GM12878 (cell line): ENCODE measurements at regions of chr14 and their contacts with region 1.

Region 1: DNA sequence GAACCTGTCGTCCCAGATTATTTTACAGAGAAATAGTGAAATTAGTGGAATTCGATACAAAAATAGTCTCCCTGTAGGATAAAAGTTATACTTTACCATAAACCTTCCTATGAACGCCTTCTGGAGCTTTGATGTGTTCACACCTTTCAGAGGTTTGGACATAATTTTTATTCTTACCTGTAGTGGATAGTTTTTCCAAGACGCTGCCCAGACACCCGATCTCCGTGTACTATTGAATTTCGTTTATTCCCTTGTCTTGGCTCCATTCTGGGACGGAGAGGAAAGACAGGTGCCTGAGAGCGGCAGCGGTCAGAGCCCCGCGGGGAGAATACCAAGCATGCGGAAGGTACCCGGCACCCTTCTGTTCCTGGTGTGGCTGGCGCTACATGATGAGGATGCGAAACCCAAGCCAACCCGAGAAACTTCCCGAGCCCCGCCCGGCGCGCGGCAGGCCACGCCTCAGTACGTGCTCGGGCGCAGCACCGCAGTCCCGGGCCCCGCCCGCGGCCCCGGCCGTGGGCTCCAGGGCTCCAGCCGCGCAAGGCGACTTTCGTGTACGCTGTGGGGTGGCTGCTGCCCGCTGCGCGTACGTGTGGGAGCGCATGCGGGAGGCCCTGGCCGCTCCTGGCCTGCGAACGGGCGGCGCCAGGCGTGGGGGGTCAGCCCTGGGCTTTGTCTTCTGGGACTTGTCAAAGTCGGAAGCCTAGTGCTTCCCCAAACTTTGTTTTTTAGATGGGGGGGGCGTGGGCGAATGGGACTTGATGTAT is 11.3 kb upstream of the SNAPC1 start:
- DNase-seq: peak; percentile 83
- ATAC-seq: peak; percentile 93
- H3K4me3 ChIP-seq: peak overlapping the region; percentile 79
- H3K27ac ChIP-seq: peak overlapping the region; percentile 59
- H3K4me1 ChIP-seq: peaks cover 19% of the 10 kb centered on the region
- H3K27me3 ChIP-seq: no peaks in the 10 kb centered on the region
- CTCF ChIP-seq: no peak
- EP300 ChIP-seq: peak; percentile 45 to 66; a peak in 2 of 4 replicates
- POLR2A ChIP-seq: peak; percentile 85
- RAD21 ChIP-seq: no peak

Region 2: DNA sequence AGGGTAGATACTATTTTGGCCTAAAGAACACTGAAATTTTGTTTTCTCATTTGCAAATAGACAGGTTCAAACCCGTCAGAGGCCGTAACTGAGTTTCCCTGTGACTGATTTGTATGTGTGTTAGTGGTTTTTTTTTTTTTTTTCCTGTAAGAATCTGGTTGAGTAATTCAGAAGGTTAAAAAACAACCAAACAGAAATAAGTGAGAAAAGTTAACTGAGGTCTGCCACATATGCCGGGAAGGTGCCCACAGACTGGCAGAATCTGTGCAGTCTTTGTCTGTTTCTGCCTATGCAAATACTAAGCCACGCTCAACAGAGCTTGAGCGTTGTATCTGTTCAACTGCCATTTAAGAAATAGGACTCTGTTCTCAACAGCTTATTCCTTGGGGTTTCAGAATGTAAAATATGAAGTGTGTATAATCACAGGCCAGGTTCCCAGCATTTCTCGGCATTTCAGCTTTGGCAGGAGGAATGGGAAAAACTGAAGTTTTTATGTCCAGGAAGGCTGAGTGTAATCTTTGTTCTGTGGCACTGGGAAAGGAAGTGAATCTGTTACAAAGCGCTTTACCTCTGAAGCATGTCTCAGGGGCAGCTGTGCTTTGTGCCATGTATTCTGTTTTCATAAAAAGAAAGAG is 247.6 kb before region 1 on chr14:
- CTCF ChIA-PET with region 1: interaction called, 7 read pairs
- POLR2A ChIA-PET with region 1: interaction called, 10 read pairs
- RAD21 ChIA-PET with region 1: interaction called, 10 read pairs
- SMC1A ChIA-PET with region 1: interaction called, 12 read pairs
- in situ Hi-C with region 1: no loop called
- intact Hi-C with region 1: no loop called
- DNase-seq: peak; percentile 94
- ATAC-seq: peak; percentile 93
- H3K4me3 ChIP-seq: peak overlapping the region; percentile 19; the same call in 1 of the 2 replicates
- H3K27ac ChIP-seq: peak overlapping the region; percentile 95
- H3K4me1 ChIP-seq: peaks cover 30% of the 10 kb centered on the region
- H3K27me3 ChIP-seq: no peaks in the 10 kb centered on the region
- CTCF ChIP-seq: no peak
- EP300 ChIP-seq: peak; percentile 30 to 87; a peak in 3 of 4 replicates
- POLR2A ChIP-seq: no peak
- RAD21 ChIP-seq: no peak

Region 3: GRCh38 chr14:61703342-61704129 is 47.4 kb before region 1 on chr14:
- CTCF ChIA-PET with region 1: interaction called, 5 read pairs
- POLR2A ChIA-PET with region 1: interaction called, 21 read pairs
- RAD21 ChIA-PET with region 1: interaction called, 52 read pairs
- SMC1A ChIA-PET with region 1: interaction called, 39 read pairs
- in situ Hi-C with region 1: no loop called
- intact Hi-C with region 1: no loop called
- DNase-seq: no peak
- ATAC-seq: peak; percentile 54
- H3K4me3 ChIP-seq: 0 out of 2 replicates have a peak overlapping the region, but pooled peaks have one; percentile 18
- H3K27ac ChIP-seq: no peak overlapping the region; the same call in 1 of the 2 replicates
- H3K4me1 ChIP-seq: peaks cover 9% of the 10 kb centered on the region; the same call in 1 of the 2 replicates
- H3K27me3 ChIP-seq: no peaks in the 10 kb centered on the region
- CTCF ChIP-seq: no peak
- EP300 ChIP-seq: no peak
- POLR2A ChIP-seq: no peak
- RAD21 ChIP-seq: no peak

Region 4: GRCh38 chr14:61719344-61720293 is 31.3 kb before region 1 on chr14:
- CTCF ChIA-PET with region 1: interaction called, 9 read pairs
- POLR2A ChIA-PET with region 1: interaction called, 7 read pairs
- RAD21 ChIA-PET with region 1: interaction called, 15 read pairs
- SMC1A ChIA-PET with region 1: interaction called, 114 read pairs
- in situ Hi-C with region 1: no loop called
- intact Hi-C with region 1: no loop called
- DNase-seq: no peak
- ATAC-seq: peak; percentile 48
- H3K4me3 ChIP-seq: no peak overlapping the region; the same call in 1 of the 2 replicates
- H3K27ac ChIP-seq: peak overlapping the region; percentile 15; the same call in 1 of the 2 replicates
- H3K4me1 ChIP-seq: peaks cover 20% of the 10 kb centered on the region
- H3K27me3 ChIP-seq: no peaks in the 10 kb centered on the region
- CTCF ChIP-seq: no peak
- EP300 ChIP-seq: no peak
- POLR2A ChIP-seq: no peak
- RAD21 ChIP-seq: no peak

Region 5: GRCh38 chr14:61737915-61738314 is 13.0 kb before region 1 on chr14:
- CTCF ChIA-PET with region 1: interaction called, 11 read pairs
- POLR2A ChIA-PET with region 1: interaction called, 5 read pairs
- RAD21 ChIA-PET with region 1: interaction called, 17 read pairs
- SMC1A ChIA-PET with region 1: interaction called, 26 read pairs
- in situ Hi-C with region 1: no loop called
- intact Hi-C with region 1: no loop called
- DNase-seq: no peak
- ATAC-seq: no peak
- H3K4me3 ChIP-seq: no peak overlapping the region
- H3K27ac ChIP-seq: no peak overlapping the region
- H3K4me1 ChIP-seq: no peaks in the 10 kb centered on the region
- H3K27me3 ChIP-seq: no peaks in the 10 kb centered on the region
- CTCF ChIP-seq: no peak
- EP300 ChIP-seq: no peak
- POLR2A ChIP-seq: no peak
- RAD21 ChIP-seq: no peak